Mammary epithelial cell (primary cell): ENCODE measurements at regions of chr11 and their contacts with region 1.

Region 1: DNA sequence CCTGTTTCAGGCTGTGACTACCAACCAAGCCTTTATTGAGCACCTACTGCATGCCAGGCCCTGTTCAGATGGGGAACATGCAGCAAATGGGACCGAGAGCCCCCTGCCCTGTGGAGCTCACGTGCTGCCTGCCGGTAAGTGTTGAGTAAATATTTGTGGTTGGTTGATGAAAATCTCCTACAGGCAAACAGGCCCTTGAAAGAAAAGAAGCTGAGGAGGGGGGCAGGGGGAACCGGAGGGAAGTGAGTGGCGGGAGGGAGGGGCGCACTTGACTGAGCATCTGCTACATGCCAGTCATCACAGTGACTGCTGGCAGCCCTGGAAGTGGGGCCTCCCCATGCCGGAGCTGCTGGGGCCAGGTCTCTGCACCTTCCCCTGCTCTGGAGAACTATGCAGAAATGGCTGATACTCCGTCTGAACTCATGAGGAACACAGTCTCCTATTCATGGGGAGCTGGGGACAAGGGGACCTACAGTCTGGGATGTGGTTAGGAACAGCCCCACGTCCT is 34.2 kb downstream of the MACROD1 start:
- DNase-seq: no peak
- H3K4me3 ChIP-seq: no peak overlapping the region
- H3K27ac ChIP-seq: no peak overlapping the region
- H3K4me1 ChIP-seq: no peaks in the 10 kb centered on the region
- H3K27me3 ChIP-seq: no peaks in the 10 kb centered on the region
- CTCF ChIP-seq: no peak

Region 2: GRCh38 chr11:64007629-64008282 is 124.0 kb before region 1 on chr11:
- CTCF ChIA-PET with region 1: no interaction called
- dilution Hi-C with region 1: loop called (anchors 5 kb)
- in situ Hi-C with region 1: no loop called
- intact Hi-C with region 1: no loop called
- DNase-seq: no peak
- H3K4me3 ChIP-seq: peak overlapping the region in 2 of 3 experiments; percentile 29 to 40
- H3K27ac ChIP-seq: no peak overlapping the region
- H3K4me1 ChIP-seq: peaks cover 13% of the 10 kb centered on the region
- H3K27me3 ChIP-seq: no peaks in the 10 kb centered on the region
- CTCF ChIP-seq: peak in 1 of 2 donors; percentile 20

Region 3: DNA sequence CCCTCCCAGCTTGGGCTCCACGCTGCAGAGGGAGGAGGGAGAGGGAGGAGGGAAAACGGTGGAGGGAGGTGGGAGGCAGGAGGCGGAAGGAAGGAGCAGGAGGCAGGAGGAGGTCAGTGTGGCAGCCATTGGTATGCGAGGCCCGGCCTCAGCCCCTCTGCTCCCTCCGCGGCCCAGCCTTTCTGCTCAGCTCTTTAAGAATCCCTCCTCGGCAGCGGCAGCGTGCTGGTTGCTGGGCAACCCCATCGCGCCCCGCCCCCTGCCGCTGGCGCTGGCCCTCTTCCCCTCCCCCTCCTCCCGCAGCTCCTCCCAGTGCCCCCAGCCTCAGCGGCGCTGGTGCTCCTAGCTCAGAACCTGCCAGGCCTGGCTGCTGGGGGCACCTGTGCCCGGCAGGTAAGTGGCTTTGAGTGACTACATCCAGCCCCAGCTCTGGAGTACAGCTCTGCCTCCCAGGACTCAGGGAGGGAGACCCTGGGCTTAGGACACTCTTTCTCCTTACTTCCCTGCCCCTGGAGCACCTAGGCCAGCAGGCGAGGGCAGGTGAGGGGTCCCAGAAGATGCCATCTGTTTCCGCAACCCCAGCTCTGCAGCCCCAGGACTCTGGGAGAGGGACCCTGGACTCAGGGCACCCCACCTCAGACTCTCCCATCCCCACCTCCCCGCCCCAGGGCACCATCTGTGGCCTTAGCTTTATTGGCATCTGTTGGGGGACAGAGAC is 103.2 kb before region 1 on chr11:
- CTCF ChIA-PET with region 1: no interaction called
- dilution Hi-C with region 1: no loop called
- in situ Hi-C with region 1: loop called in 1 of 2 experiments (anchors 10 kb)
- intact Hi-C with region 1: no loop called
- DNase-seq: no peak
- H3K4me3 ChIP-seq: no peak overlapping the region
- H3K27ac ChIP-seq: no peak overlapping the region
- H3K4me1 ChIP-seq: no peaks in the 10 kb centered on the region
- H3K27me3 ChIP-seq: peaks cover 4% of the 10 kb centered on the region
- CTCF ChIP-seq: no peak